AG04449 (cell line): ENCODE measurements at regions of chr17 and their contacts with region 1.

Region 1: DNA sequence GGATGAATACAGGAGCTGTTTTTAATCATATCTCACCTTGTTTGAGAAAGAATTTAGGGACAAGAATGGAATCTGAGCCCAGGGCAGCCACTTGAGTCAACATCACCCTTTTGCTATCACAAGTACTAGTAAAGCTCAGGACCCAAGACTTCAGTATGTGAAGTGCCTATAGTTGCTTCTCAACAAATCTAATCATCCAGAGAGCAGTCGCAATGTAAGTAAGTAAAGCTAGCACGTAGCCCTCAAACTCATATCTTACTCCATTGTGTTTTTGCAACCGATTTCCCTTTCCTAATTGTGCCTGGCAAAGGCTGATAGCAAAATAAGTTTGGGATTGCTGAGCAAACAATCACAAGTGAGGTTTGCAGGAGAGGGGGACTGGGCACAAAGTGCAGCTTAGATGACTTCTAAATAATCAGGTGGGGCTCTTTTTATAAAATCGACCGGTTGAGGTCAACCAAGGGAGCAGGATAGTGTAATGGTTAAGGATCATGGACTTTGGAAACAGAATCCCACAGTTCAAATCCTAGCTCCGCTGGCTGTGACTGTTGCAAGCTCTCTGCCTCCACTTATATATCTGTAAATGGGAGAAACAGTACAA is 13.0 kb downstream of the TOB1 start:
- DNase-seq: no peak
- H3K4me3 ChIP-seq: no peak overlapping the region
- CTCF ChIP-seq: no peak

Region 2: GRCh38 chr17:50828508-50829170 is 24.5 kb before region 1 on chr17:
- CTCF ChIA-PET with region 1: interaction called, 29 read pairs
- POLR2A ChIA-PET with region 1: no interaction called
- DNase-seq: no peak
- H3K4me3 ChIP-seq: no peak overlapping the region
- CTCF ChIP-seq: no peak

Region 3: DNA sequence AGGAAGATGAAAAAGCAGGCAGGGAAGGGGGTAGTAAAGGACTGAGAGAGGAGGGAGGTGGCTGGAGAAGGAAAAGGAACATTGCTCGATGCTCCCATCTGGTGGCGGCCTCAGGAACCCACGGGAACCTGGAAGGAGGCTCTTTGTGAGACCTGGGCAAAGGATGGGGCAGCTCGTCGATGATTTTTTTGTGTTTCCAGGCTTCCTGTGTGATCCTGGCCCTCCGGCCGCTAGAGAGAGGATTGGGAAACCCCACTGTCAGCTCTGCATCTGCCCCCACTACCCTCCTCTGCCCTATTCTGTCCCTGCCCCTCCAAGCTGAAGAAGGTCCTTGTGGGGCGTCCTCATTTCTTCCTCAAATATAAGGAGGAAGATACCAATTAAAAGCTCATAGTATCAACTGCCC is 11.2 kb before region 1 on chr17:
- CTCF ChIA-PET with region 1: interaction called, 92 read pairs
- POLR2A ChIA-PET with region 1: no interaction called
- DNase-seq: no peak
- H3K4me3 ChIP-seq: no peak overlapping the region
- CTCF ChIP-seq: peak; percentile 91

Region 4: GRCh38 chr17:50931144-50931908 is 78.2 kb after region 1 on chr17:
- CTCF ChIA-PET with region 1: interaction called, 14 read pairs
- POLR2A ChIA-PET with region 1: no interaction called
- DNase-seq: no peak
- H3K4me3 ChIP-seq: peak overlapping the region; percentile 42
- CTCF ChIP-seq: no peak

Region 5: DNA sequence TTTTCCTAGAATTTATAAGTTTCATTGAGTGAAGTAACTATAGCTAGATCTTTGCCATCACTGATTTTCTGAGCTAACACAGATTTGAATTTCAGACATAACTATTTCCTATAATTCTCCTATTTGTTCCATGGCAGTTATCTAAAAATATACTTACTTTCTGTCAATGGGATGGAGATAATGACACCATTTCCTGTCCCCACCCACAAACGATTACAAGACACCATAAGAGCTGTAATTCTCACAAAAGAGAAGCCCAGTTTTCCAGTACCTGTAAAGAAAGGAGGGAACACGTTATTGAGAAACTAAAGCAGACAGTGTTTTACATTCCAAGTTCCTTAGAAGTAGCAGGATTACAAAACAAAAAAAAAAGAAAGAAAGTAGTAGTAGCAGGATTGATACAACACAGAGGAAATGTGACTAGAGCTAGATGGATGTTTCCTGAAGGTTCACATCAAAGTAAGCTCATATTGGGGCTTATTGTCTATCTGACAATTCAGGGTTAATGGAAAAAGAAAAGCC is 123.9 kb after region 1 on chr17:
- CTCF ChIA-PET with region 1: interaction called, 21 read pairs
- POLR2A ChIA-PET with region 1: no interaction called
- DNase-seq: no peak
- H3K4me3 ChIP-seq: no peak overlapping the region
- CTCF ChIP-seq: no peak

Region 6: DNA sequence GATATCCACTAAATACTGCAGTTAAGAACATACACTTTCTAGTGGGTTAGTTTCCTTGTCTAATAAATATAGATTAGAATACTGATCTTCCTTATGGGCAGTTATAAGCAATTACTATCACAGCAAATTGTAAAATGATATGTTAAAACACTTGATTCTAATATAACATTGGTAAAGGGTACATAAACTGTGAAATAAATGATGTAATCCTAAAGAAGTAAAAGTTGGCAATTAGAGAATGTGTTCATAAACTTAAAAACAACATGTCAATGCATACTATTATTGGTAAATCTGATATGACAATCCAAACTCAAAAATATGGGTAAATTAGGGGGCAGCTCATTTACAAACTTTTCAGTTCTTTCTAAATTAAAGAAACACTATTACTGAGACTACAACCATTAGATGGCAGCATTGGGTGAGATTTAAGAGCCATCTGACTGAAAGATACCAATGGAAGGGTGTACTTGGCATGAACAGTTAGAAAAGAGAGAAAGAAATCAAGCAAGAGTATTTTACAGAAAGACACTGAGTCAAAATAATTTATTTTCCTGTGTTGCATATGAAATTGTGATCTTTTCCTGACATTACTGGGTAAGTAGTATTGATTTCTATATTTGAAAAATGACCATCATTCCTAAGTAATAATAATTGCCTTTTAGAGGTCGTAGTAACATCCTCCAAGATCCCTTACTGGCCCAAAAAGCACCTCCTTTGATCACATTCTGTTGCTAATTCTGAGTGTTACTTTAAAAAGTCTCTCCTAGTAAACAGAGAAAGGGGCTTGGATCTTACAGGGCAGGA is 147.9 kb after region 1 on chr17:
- CTCF ChIA-PET with region 1: interaction called, 31 read pairs
- POLR2A ChIA-PET with region 1: no interaction called
- DNase-seq: no peak
- H3K4me3 ChIP-seq: no peak overlapping the region
- CTCF ChIP-seq: no peak

Region 7: GRCh38 chr17:51153210-51154072 is 300.3 kb after region 1 on chr17 and contains the start of gene NME1:
- CTCF ChIA-PET with region 1: interaction called, 16 read pairs
- POLR2A ChIA-PET with region 1: interaction called, 4 read pairs
- DNase-seq: peak; percentile 98
- H3K4me3 ChIP-seq: peak within 1 kb of the TSS; percentile 93
- CTCF ChIP-seq: peak; percentile 81